ENCODE measurements at regions of chr1 and their contacts with region 1.

Region 1: DNA sequence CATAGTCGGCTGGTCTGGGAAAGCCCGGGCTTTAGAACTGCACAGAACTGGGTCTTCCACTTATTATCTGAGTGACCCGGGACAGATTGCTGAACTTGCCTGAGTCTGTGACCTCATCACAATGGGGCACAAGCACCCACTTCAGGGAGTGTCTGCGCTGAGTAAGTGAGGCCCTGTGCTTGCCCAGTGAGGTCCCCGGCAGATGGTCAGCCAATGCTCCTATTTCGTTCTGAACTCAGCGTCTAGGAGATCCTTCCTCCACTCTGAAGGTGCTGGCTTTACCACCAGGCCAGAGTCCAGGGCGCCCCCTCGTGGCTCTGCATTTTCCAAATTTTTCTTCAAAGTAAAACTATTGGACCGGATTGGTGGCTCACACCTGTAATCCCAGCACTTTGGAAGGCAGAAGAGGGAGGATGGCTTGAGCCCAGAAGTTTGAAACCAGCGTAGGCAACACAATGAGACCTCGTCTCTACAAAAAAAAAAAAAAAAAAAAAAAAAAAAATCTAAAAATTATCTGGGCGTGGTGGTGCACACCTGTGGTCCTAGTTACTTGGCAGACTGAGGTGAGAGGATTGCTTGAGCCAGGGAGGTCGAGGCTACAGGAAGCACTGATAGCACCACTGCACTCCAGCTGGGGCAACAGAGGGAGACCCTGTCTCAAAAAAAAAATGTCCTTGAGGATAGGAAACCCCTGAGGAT is 61.7 kb downstream of the FCRL5 start:
- DNase-seq: no peak
- ATAC-seq: no peak

Region 2: DNA sequence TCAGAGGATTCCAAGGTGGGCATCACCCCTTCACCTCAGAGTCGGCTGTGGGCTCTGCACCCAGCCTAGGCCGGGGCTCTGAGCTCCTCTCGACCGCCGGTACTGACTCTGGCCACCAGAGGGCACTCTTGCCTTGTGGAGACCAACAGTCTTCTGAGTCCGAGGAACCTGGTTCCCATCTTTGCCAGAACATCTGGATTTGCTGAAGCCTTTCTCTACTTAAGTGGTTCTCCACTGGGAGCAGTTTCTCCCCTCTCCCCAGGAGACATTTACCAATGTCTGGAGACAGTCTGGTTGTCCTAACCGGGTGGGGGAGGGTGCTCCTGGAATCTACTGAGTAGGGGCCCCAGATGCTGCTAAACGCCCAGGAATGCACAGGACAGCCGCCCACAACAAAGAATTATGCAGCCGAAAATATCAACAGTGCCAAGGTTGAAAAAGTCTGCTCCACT is 400.4 kb before region 1 on chr1:
- intact Hi-C with region 1: loop called (anchors 10 kb)
- DNase-seq: peak; percentile 91
- ATAC-seq: peak; percentile 86

Region 3: DNA sequence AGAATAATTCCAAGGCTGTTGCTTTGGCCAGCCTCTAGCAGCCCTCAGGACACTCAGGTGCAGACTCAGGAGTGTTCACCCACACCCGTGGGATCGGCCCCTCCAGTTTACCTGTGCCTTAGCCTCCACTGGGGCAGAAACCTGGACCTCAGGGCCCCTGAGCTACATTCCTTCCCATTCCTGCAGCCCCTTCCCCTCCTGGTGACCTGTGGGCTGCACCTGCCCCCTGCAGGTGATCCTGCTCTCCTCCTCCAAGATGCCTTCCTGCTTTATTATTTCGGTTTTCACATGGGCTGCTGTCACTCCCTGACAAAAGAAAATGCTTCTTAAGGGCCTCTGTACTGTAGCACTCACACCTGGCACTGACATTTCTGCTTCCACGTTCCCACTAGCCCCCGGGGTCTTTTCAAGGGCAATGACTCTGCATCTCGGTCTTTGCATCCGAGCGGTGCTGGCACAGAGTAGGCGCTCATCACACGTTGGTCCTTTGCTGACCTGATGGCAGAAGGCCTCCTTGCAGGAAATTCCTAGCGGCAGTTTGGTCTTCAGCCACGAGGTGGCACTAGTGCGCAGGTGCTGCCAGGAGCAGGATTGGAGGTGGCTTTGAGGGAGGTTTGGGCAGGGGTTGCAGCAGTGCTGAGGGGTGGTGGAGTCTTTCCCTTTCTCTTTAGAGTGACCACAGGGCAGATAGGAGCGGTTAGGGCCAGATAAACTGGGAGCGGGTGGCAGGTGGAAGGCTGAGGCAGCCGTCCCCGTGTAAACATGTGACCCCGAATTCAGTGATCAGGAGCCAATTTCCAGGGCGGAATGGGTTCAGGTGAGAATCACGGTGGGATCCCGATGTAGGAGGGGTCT is 327.1 kb before region 1 on chr1:
- intact Hi-C with region 1: loop called (anchors 10 kb)
- DNase-seq: peak; percentile 84
- ATAC-seq: peak; percentile 62

Region 4: GRCh38 chr1:157199421-157199755 is 291.2 kb before region 1 on chr1:
- intact Hi-C with region 1: loop called (anchors 5 kb)
- DNase-seq: no peak
- ATAC-seq: no peak

Region 5: DNA sequence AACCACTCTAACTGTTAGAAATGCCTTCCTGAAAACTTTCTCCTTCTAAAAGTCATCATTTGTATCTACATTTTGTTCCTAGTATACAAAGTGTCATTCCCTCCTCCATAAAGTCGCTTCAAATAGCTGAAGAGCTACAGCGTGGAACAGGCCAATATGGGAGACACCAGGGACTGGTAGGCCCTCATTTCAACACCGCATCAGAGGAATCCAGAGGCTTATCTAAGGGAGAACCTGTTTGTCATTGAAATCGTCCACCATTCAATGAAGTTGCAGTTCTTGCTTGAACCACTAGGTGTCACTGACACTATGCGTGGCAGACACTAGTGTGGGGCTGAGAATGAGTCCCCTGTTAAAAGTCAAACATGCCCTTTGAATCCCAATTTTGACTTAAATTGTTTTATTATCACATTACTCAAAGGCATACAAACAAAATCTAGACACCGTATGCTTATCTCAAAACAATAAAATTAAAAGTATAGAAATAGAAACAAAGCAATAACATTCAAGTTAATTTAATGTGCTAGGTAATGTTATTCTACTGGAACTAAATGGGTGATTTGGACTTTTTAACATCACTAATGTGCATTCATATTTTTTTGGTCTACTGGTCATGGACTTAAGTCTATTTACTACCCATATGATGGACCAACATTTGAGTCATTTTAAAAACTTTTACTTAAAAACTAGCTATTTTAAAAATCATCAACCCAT is 120.7 kb before region 1 on chr1:
- intact Hi-C with region 1: loop called (anchors 5 kb)
- DNase-seq: no peak
- ATAC-seq: peak; percentile 62

Region 6: DNA sequence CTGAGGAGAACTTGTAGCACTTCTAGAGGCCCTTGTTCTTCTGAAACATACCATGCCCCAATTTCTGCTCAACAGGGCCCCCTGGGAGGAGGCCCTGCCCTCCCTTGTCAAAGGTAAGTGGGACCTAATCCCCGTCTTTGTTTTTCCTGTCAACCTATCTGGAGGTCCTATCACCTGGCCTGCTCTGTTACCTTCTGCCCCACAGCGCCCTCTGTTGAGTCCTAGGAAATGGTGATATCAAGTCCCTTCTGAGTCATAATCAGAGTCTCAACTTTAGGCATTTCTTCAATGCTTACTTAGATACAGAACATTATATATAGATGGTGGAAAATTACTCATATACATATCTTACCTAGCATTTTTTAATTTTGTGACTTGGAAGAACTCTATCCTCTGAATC is 135.5 kb after region 1 on chr1:
- intact Hi-C with region 1: no loop called
- DNase-seq: no peak
- ATAC-seq: no peak

Region 7: GRCh38 chr1:157992031-157992832 is 501.6 kb after region 1 on chr1:
- intact Hi-C with region 1: no loop called
- DNase-seq: no peak
- ATAC-seq: peak; percentile 78